Caco-2 (cell line): ENCODE measurements at regions of chr9 and their contacts with region 1.

Region 1: GRCh38 chr9:8337834-8338766 is 538.5 kb upstream of the DMAC1 start:
- DNase-seq: peak; percentile 40 to 56
- H3K4me3 ChIP-seq: no peak overlapping the region
- H3K4me3 Mint-ChIP-seq: no peak overlapping the region
- H3K27ac Mint-ChIP-seq: no peak overlapping the region
- H3K4me1 ChIP-seq: peaks cover 19% of the 10 kb centered on the region
- H3K4me1 Mint-ChIP-seq: no peaks in the 10 kb centered on the region
- H3K27me3 ChIP-seq: no peaks in the 10 kb centered on the region
- H3K27me3 Mint-ChIP-seq: no peaks in the 10 kb centered on the region
- CTCF ChIP-seq: no peak

Region 2: GRCh38 chr9:8287501-8287900 is 50.6 kb before region 1 on chr9:
- CTCF ChIA-PET with region 1: no interaction called
- POLR2A ChIA-PET with region 1: no interaction called
- intact Hi-C with region 1: loop called (anchors 5 kb)
- DNase-seq: peak; percentile 47 to 59
- H3K4me3 ChIP-seq: no peak overlapping the region
- H3K4me3 Mint-ChIP-seq: no peak overlapping the region
- H3K27ac Mint-ChIP-seq: peak overlapping the region; percentile 76
- H3K4me1 ChIP-seq: peaks cover 31% of the 10 kb centered on the region
- H3K4me1 Mint-ChIP-seq: peaks cover 14% of the 10 kb centered on the region
- H3K27me3 ChIP-seq: no peaks in the 10 kb centered on the region
- H3K27me3 Mint-ChIP-seq: no peaks in the 10 kb centered on the region
- CTCF ChIP-seq: no peak